ENCODE measurements at regions of chr1 and their contacts with region 1.

Region 1: GRCh38 chr1:35180776-35181374 is 12.1 kb downstream of the SFPQ start:
- DNase-seq: peak; percentile 23
- ATAC-seq: no peak
- H3K4me3 ChIP-seq: no peak overlapping the region
- H3K4me3 Mint-ChIP-seq: no peak overlapping the region
- H3K27ac ChIP-seq: no peak overlapping the region
- H3K27ac Mint-ChIP-seq: no peak overlapping the region
- H3K4me1 ChIP-seq: no peaks in the 10 kb centered on the region
- H3K4me1 Mint-ChIP-seq: peaks cover 33% of the 10 kb centered on the region
- H3K27me3 ChIP-seq: no peaks in the 10 kb centered on the region
- H3K27me3 Mint-ChIP-seq: no peaks in the 10 kb centered on the region
- CTCF ChIP-seq: no peak

Region 2: GRCh38 chr1:34642679-34643078 is 538.2 kb before region 1 on chr1:
- CTCF ChIA-PET with region 1: no interaction called
- POLR2A ChIA-PET with region 1: no interaction called
- intact Hi-C with region 1: no loop called
- DNase-seq: no peak
- ATAC-seq: no peak
- H3K4me3 ChIP-seq: no peak overlapping the region
- H3K4me3 Mint-ChIP-seq: no peak overlapping the region
- H3K27ac ChIP-seq: no peak overlapping the region
- H3K27ac Mint-ChIP-seq: no peak overlapping the region
- H3K4me1 ChIP-seq: no peaks in the 10 kb centered on the region
- H3K4me1 Mint-ChIP-seq: no peaks in the 10 kb centered on the region
- H3K27me3 ChIP-seq: peaks cover 0 to 3% (median 0%) of the 10 kb centered on the region in 4 experiments
- H3K27me3 Mint-ChIP-seq: peaks cover 50% of the 10 kb centered on the region
- CTCF ChIP-seq: no peak

Region 3: DNA sequence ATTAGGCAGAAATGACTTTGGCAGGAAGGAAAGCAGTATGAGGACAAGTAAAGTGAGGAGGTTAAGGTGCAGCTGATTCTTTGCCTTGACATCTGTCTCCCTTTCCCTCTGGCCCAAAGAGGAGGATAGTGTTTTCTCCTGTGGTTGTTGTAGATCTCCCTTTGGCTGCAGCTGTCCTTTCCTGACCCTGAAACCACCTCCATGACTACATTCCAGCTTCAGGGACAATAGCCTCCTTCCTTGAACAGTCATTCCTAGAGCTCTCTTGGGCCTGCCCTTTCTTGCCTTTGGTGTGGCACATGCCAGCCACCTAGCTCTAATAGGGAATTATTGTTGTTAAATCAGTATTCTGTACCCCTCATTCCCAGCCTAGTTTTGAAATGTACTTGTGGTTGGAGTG is 95.5 kb before region 1 on chr1:
- CTCF ChIA-PET with region 1: no interaction called
- POLR2A ChIA-PET with region 1: no interaction called
- intact Hi-C with region 1: loop called (anchors 10 kb)
- DNase-seq: no peak
- ATAC-seq: no peak
- H3K4me3 ChIP-seq: no peak overlapping the region
- H3K4me3 Mint-ChIP-seq: no peak overlapping the region
- H3K27ac ChIP-seq: no peak overlapping the region
- H3K27ac Mint-ChIP-seq: no peak overlapping the region
- H3K4me1 ChIP-seq: peaks cover under 1 to 5% of the 10 kb centered on the region in 2 donors
- H3K4me1 Mint-ChIP-seq: peaks cover 7% of the 10 kb centered on the region
- H3K27me3 ChIP-seq: no peaks in the 10 kb centered on the region
- H3K27me3 Mint-ChIP-seq: no peaks in the 10 kb centered on the region
- CTCF ChIP-seq: no peak

Region 4: DNA sequence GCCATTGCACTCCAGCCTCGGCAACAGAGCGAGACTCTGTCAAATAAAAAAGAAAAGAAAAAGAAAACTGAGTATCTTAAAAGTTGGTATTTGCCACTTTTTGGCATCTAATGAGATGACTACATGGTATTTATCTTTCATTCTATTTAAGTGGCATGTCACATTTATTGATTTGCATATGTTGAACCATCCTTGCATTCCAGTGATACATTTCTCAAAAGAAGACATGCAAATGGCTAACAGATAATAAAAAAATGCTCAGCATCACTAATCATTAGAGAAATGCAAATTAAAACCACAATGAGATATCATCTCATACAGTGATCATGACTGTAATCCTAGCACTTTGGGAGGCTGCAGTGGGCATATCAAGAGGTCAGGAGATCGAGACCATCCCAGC is 16.0 kb before region 1 on chr1:
- CTCF ChIA-PET with region 1: no interaction called
- POLR2A ChIA-PET with region 1: no interaction called
- intact Hi-C with region 1: no loop called
- DNase-seq: no peak
- ATAC-seq: no peak
- H3K4me3 ChIP-seq: no peak overlapping the region
- H3K4me3 Mint-ChIP-seq: no peak overlapping the region
- H3K27ac ChIP-seq: no peak overlapping the region
- H3K27ac Mint-ChIP-seq: no peak overlapping the region
- H3K4me1 ChIP-seq: no peaks in the 10 kb centered on the region
- H3K4me1 Mint-ChIP-seq: no peaks in the 10 kb centered on the region
- H3K27me3 ChIP-seq: no peaks in the 10 kb centered on the region
- H3K27me3 Mint-ChIP-seq: no peaks in the 10 kb centered on the region
- CTCF ChIP-seq: no peak

Region 5: GRCh38 chr1:35316264-35316663 is 135.4 kb after region 1 on chr1:
- CTCF ChIA-PET with region 1: no interaction called
- POLR2A ChIA-PET with region 1: no interaction called
- intact Hi-C with region 1: no loop called
- DNase-seq: no peak
- ATAC-seq: no peak
- H3K4me3 ChIP-seq: no peak overlapping the region
- H3K4me3 Mint-ChIP-seq: no peak overlapping the region
- H3K27ac ChIP-seq: no peak overlapping the region
- H3K27ac Mint-ChIP-seq: no peak overlapping the region
- H3K4me1 ChIP-seq: no peaks in the 10 kb centered on the region
- H3K4me1 Mint-ChIP-seq: peaks cover 1% of the 10 kb centered on the region
- H3K27me3 ChIP-seq: no peaks in the 10 kb centered on the region
- H3K27me3 Mint-ChIP-seq: no peaks in the 10 kb centered on the region
- CTCF ChIP-seq: no peak

Measured in B cell (primary cell).